Endothelial cell of umbilical vein (primary cell): ENCODE measurements at regions of chr15 and their contacts with region 1.

Region 1: GRCh38 chr15:94670438-94671034 is 439.2 kb downstream of the MCTP2 start:
- DNase-seq: peak; percentile 84
- H3K4me3 ChIP-seq: no peak overlapping the region
- H3K27ac ChIP-seq: peak overlapping the region; percentile 72
- H3K4me1 ChIP-seq: peaks cover 33% of the 10 kb centered on the region
- H3K27me3 ChIP-seq: no peaks in the 10 kb centered on the region
- CTCF ChIP-seq: peak; percentile 38 to 45
- POLR2A ChIP-seq: no peak

Region 2: GRCh38 chr15:94582369-94582768 is 88.2 kb before region 1 on chr15:
- CTCF ChIA-PET with region 1: interaction called, 198 read pairs
- POLR2A ChIA-PET with region 1: interaction called, 3 read pairs
- dilution Hi-C with region 1: no loop called
- intact Hi-C with region 1: loop called (anchors 1 kb)
- DNase-seq: peak; percentile 85
- H3K4me3 ChIP-seq: no peak overlapping the region
- H3K27ac ChIP-seq: no peak overlapping the region
- H3K4me1 ChIP-seq: peaks cover 25% of the 10 kb centered on the region
- H3K27me3 ChIP-seq: no peaks in the 10 kb centered on the region
- CTCF ChIP-seq: peak; percentile 75 to 80
- POLR2A ChIP-seq: no peak

Region 3: GRCh38 chr15:94743668-94744067 is 73.1 kb after region 1 on chr15:
- CTCF ChIA-PET with region 1: no interaction called
- POLR2A ChIA-PET with region 1: no interaction called
- dilution Hi-C with region 1: no loop called
- intact Hi-C with region 1: no loop called
- DNase-seq: no peak
- H3K4me3 ChIP-seq: no peak overlapping the region
- H3K27ac ChIP-seq: no peak overlapping the region
- H3K4me1 ChIP-seq: no peaks in the 10 kb centered on the region
- H3K27me3 ChIP-seq: no peaks in the 10 kb centered on the region
- CTCF ChIP-seq: no peak
- POLR2A ChIP-seq: no peak

Region 4: GRCh38 chr15:94793641-94794040 is 123.1 kb after region 1 on chr15:
- CTCF ChIA-PET with region 1: interaction called, 6 read pairs
- POLR2A ChIA-PET with region 1: no interaction called
- dilution Hi-C with region 1: no loop called
- intact Hi-C with region 1: loop called (anchors 5 kb)
- DNase-seq: no peak
- H3K4me3 ChIP-seq: no peak overlapping the region
- H3K27ac ChIP-seq: no peak overlapping the region
- H3K4me1 ChIP-seq: peaks cover 12% of the 10 kb centered on the region
- H3K27me3 ChIP-seq: no peaks in the 10 kb centered on the region
- CTCF ChIP-seq: no peak
- POLR2A ChIP-seq: no peak

Region 5: DNA sequence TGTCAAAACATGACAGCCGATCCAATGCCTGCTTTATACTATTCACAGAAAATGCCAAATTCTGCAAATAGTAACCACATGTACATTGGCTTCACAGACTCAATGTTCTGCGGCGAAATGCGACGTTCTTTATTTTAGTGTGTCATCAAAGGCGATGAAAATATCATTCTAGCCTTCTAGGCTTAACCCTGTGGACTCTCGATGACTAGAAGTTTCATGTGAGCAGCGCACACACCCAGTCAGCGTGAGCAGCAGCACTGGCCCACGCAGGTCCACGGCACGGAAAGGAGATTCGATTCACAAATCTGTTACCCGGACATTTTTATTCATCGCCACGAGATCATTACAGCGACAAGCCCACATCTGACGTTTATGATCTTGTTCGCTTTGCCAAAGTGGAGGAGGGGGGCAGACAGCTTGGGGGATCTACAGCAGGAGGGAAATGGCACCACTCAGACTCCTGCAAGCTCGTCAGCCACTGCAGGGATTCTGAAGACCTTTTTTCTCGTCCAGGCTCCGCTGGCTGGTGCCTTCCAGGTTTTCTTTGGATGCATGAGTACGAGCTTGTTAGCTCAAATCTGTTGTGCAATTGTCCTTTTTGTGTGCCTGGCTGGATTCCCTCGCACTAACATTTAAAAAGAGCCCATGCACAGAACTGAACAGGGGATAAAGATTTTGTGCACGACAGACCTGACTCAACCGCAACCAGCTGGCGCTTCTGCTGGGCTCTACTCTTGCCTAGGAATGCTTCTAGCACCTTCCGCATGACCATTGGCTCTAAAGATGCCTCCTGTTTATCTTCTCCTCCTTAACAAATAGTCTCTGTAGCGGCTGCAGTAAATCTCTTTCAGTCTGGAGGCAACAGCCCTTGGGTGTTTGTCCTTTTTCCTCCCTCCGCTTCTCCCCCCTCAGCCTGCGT is 499.3 kb after region 1 on chr15:
- CTCF ChIA-PET with region 1: interaction called, 14 read pairs
- POLR2A ChIA-PET with region 1: no interaction called
- dilution Hi-C with region 1: no loop called
- intact Hi-C with region 1: no loop called
- DNase-seq: no peak
- H3K4me3 ChIP-seq: no peak overlapping the region
- H3K27ac ChIP-seq: no peak overlapping the region
- H3K4me1 ChIP-seq: peaks cover 7% of the 10 kb centered on the region
- H3K27me3 ChIP-seq: no peaks in the 10 kb centered on the region
- CTCF ChIP-seq: no peak
- POLR2A ChIP-seq: no peak

Region 6: DNA sequence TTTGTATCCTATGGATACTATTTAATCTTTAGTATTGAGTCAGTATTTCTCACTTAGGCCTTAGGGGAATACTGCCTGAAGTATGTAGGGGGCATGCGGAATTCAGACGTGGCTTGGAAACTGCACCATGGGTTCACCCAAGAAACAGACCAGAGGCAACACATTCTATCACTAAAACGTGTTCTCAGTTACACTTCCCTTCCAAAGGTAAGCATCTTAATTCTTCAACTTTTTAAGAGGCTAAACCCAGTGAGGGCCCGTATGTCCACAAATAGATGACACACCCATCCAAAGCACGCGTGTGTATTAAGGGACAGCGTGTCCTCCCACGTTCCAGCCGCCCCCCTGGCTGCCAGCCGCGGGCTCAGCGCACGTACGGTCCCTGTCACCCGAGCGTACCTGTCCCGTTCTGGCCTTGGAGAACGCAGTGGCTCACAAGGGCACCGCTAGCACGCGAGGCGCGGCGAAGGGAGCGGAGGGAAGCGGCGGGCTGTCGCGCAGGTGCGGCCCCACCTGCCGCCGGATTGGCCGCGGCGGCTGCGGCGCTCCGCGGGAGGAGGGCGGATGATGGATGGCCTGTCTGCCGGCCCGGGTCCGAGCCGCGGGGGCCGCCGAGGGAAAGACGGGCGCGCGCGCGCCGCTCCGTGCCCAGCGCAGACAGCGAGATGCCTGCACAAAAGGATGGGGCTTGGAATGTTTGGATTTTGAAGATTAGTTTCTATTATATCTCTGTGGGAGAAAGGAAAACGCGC is 656.1 kb after region 1 on chr15:
- CTCF ChIA-PET with region 1: interaction called, 5 read pairs
- POLR2A ChIA-PET with region 1: no interaction called
- dilution Hi-C with region 1: no loop called
- intact Hi-C with region 1: loop called (anchors 1 kb)
- DNase-seq: peak; percentile 75
- H3K4me3 ChIP-seq: peak overlapping the region; percentile 64 to 81 (median 65)
- H3K27ac ChIP-seq: peak overlapping the region; percentile 98
- H3K4me1 ChIP-seq: peaks cover 63% of the 10 kb centered on the region
- H3K27me3 ChIP-seq: no peaks in the 10 kb centered on the region
- CTCF ChIP-seq: peak in 1 of 2 donors; percentile 0
- POLR2A ChIP-seq: no peak

Region 7: GRCh38 chr15:95734422-95735316 is 1064.1 kb after region 1 on chr15:
- CTCF ChIA-PET with region 1: interaction called, 3 read pairs
- POLR2A ChIA-PET with region 1: no interaction called
- dilution Hi-C with region 1: no loop called
- intact Hi-C with region 1: loop called (anchors 10 kb)
- DNase-seq: peak; percentile 96
- H3K4me3 ChIP-seq: no peak overlapping the region
- H3K27ac ChIP-seq: peak overlapping the region; percentile 70
- H3K4me1 ChIP-seq: peaks cover 28% of the 10 kb centered on the region
- H3K27me3 ChIP-seq: no peaks in the 10 kb centered on the region
- CTCF ChIP-seq: no peak
- POLR2A ChIP-seq: peak; percentile 50

Region 8: GRCh38 chr15:96585484-96586386 is 1915.2 kb after region 1 on chr15:
- CTCF ChIA-PET with region 1: interaction called, 3 read pairs
- POLR2A ChIA-PET with region 1: no interaction called
- dilution Hi-C with region 1: no loop called
- intact Hi-C with region 1: loop called (anchors 2 kb)
- DNase-seq: peak; percentile 39
- H3K4me3 ChIP-seq: no peak overlapping the region
- H3K27ac ChIP-seq: no peak overlapping the region
- H3K4me1 ChIP-seq: no peaks in the 10 kb centered on the region
- H3K27me3 ChIP-seq: peaks cover 0 to 2% of the 10 kb centered on the region in 2 experiments
- CTCF ChIP-seq: peak in 1 of 2 donors; percentile 33
- POLR2A ChIP-seq: no peak